Naive thymus-derived CD4-positive, alpha-beta T cell (primary cell): ENCODE measurements at regions of chr14 and their contacts with region 1.

Region 1: GRCh38 chr14:56474419-56475022 is 105.1 kb upstream of the TMEM260 start:
- DNase-seq: peak in 5 of 9 donors; percentile 32 to 51 (median 43)
- ATAC-seq: peak; percentile 63
- H3K4me3 ChIP-seq: no peak overlapping the region
- H3K4me3 Mint-ChIP-seq: no peak overlapping the region
- H3K27ac ChIP-seq: no peak overlapping the region
- H3K27ac Mint-ChIP-seq: no peak overlapping the region
- H3K4me1 ChIP-seq: no peaks in the 10 kb centered on the region
- H3K4me1 Mint-ChIP-seq: no peaks in the 10 kb centered on the region
- H3K27me3 ChIP-seq: no peaks in the 10 kb centered on the region
- H3K27me3 Mint-ChIP-seq: peaks cover 0 to 23% (median 12%) of the 10 kb centered on the region in 5 donors

Region 2: GRCh38 chr14:55212634-55213033 is 1261.9 kb before region 1 on chr14:
- CTCF ChIA-PET with region 1: no interaction called
- POLR2A ChIA-PET with region 1: no interaction called
- intact Hi-C with region 1: loop called in 1 of 2 experiments (anchors 1 kb)
- DNase-seq: no peak
- ATAC-seq: no peak
- H3K4me3 ChIP-seq: no peak overlapping the region
- H3K4me3 Mint-ChIP-seq: no peak overlapping the region
- H3K27ac ChIP-seq: no peak overlapping the region
- H3K27ac Mint-ChIP-seq: no peak overlapping the region
- H3K4me1 ChIP-seq: no peaks in the 10 kb centered on the region
- H3K4me1 Mint-ChIP-seq: peaks cover 0 to 5% (median 5%) of the 10 kb centered on the region in 7 donors
- H3K27me3 ChIP-seq: no peaks in the 10 kb centered on the region
- H3K27me3 Mint-ChIP-seq: peaks cover 0 to 11% (median 0%) of the 10 kb centered on the region in 5 donors

Region 3: GRCh38 chr14:55446218-55446654 is 1028.3 kb before region 1 on chr14:
- CTCF ChIA-PET with region 1: interaction called, 4 read pairs
- POLR2A ChIA-PET with region 1: interaction called, 3 read pairs
- intact Hi-C with region 1: loop called (anchors 1 kb)
- DNase-seq: peak in 7 of 9 donors; percentile 28 to 58 (median 44)
- ATAC-seq: peak; percentile 64
- H3K4me3 ChIP-seq: no peak overlapping the region
- H3K4me3 Mint-ChIP-seq: no peak overlapping the region
- H3K27ac ChIP-seq: no peak overlapping the region
- H3K27ac Mint-ChIP-seq: no peak overlapping the region
- H3K4me1 ChIP-seq: no peaks in the 10 kb centered on the region
- H3K4me1 Mint-ChIP-seq: peaks cover 0 to 10% (median 0%) of the 10 kb centered on the region in 7 donors
- H3K27me3 ChIP-seq: no peaks in the 10 kb centered on the region
- H3K27me3 Mint-ChIP-seq: no peaks in the 10 kb centered on the region

Region 4: GRCh38 chr14:55731881-55732498 is 742.5 kb before region 1 on chr14:
- CTCF ChIA-PET with region 1: interaction called, 27 read pairs
- POLR2A ChIA-PET with region 1: no interaction called
- intact Hi-C with region 1: loop called (anchors 1 to 2 kb)
- DNase-seq: peak; percentile 8 to 58 (median 33)
- ATAC-seq: peak; percentile 44
- H3K4me3 ChIP-seq: no peak overlapping the region
- H3K4me3 Mint-ChIP-seq: no peak overlapping the region
- H3K27ac ChIP-seq: no peak overlapping the region
- H3K27ac Mint-ChIP-seq: no peak overlapping the region
- H3K4me1 ChIP-seq: no peaks in the 10 kb centered on the region
- H3K4me1 Mint-ChIP-seq: peaks cover 0 to 19% (median 0%) of the 10 kb centered on the region in 7 donors
- H3K27me3 ChIP-seq: no peaks in the 10 kb centered on the region
- H3K27me3 Mint-ChIP-seq: peaks cover 0 to 16% (median 4%) of the 10 kb centered on the region in 5 donors

Region 5: GRCh38 chr14:55864890-55865655 is 609.4 kb before region 1 on chr14:
- CTCF ChIA-PET with region 1: no interaction called
- POLR2A ChIA-PET with region 1: no interaction called
- intact Hi-C with region 1: loop called in 1 of 2 experiments (anchors 2 kb)
- DNase-seq: no peak
- ATAC-seq: no peak
- H3K4me3 ChIP-seq: no peak overlapping the region
- H3K4me3 Mint-ChIP-seq: no peak overlapping the region
- H3K27ac ChIP-seq: no peak overlapping the region
- H3K27ac Mint-ChIP-seq: no peak overlapping the region
- H3K4me1 ChIP-seq: no peaks in the 10 kb centered on the region
- H3K4me1 Mint-ChIP-seq: peaks cover 0 to 6% (median 0%) of the 10 kb centered on the region in 7 donors
- H3K27me3 ChIP-seq: no peaks in the 10 kb centered on the region
- H3K27me3 Mint-ChIP-seq: peaks cover 5 to 25% (median 8%) of the 10 kb centered on the region in 5 donors